GM12878 (cell line): ENCODE measurements at regions of chr2 and their contacts with region 1.

Region 1: DNA sequence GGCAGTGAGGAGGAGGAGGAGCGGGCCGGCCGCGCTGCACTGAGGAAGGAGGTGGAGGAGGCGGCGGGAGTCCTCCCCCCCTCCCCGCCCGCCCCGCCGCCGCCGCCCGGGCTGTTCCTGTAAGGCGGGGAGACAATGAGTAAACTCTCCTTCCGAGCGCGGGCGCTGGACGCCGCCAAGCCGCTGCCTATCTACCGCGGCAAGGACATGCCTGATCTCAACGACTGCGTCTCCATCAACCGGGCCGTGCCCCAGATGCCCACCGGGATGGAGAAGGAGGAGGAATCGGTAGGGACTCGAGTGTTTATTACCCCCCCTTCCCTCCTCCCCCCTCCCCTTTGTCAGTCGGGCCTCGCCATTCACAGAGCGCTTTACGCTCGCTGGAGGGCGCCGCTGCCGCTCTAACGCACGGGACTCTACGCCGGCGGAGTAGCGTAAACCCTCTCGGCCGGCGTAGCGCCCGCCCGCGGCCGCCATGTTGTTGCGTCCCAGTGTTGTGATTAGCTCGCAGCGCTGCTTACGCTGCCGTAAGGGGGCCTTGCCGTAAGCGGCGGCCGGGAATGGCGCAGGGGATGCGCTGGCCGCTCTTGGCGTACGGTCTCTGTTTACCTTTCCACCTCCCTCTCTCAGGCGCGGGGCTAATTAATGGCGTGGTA is 460 bp downstream of the EPC2 start:
- DNase-seq: peak; percentile 69
- ATAC-seq: peak; percentile 83
- H3K4me3 ChIP-seq: peak overlapping the region; percentile 88
- H3K27ac ChIP-seq: peak overlapping the region; percentile 72
- H3K4me1 ChIP-seq: peaks cover 15% of the 10 kb centered on the region
- H3K27me3 ChIP-seq: peaks cover 0 to 5% of the 10 kb centered on the region in 2 experiments; a peak in 2 of 4 replicates
- CTCF ChIP-seq: peak in 2 of 3 experiments; percentile 39 to 41; a peak in 3 of 6 replicates
- EP300 ChIP-seq: no peak
- POLR2A ChIP-seq: peak; percentile 78
- RAD21 ChIP-seq: peak; percentile 30

Region 2: DNA sequence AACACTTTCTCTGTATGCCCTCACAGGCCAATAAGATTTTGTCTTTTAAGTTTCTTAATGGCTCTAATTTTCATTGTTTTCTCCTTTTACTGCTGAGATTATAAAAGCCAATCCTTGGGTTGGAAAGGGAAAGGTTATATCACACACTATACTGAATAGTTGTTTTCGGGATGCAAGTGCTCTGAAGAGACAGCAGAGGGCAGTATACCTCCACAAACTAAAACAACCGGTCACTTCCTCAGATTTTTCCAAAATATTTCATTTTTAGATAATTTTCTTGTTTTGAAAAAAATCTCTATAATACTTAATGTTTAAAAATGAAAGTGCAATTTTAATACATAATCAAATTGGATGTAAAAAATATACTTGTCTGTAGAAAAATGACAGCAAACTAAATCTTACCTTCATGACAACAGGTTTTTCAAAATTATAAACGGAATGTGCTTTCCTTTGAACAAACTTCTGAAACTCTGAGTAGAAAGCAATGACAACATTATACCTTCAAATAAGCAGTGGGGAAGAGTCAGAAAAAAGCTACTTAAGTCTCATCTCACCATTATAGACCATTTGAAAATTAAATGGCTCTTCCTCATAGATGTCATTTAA is 707.2 kb before region 1 on chr2:
- CTCF ChIA-PET with region 1: interaction called, 3 read pairs
- POLR2A ChIA-PET with region 1: no interaction called
- RAD21 ChIA-PET with region 1: no interaction called
- SMC1A ChIA-PET with region 1: no interaction called
- in situ Hi-C with region 1: no loop called
- intact Hi-C with region 1: loop called (anchors 10 kb)
- DNase-seq: no peak
- ATAC-seq: peak; percentile 77
- H3K4me3 ChIP-seq: no peak overlapping the region
- H3K27ac ChIP-seq: no peak overlapping the region
- H3K4me1 ChIP-seq: no peaks in the 10 kb centered on the region
- H3K27me3 ChIP-seq: no peaks in the 10 kb centered on the region
- CTCF ChIP-seq: peak; percentile 75 to 80 (median 79)
- EP300 ChIP-seq: no peak
- POLR2A ChIP-seq: no peak
- RAD21 ChIP-seq: peak; percentile 78

Region 3: DNA sequence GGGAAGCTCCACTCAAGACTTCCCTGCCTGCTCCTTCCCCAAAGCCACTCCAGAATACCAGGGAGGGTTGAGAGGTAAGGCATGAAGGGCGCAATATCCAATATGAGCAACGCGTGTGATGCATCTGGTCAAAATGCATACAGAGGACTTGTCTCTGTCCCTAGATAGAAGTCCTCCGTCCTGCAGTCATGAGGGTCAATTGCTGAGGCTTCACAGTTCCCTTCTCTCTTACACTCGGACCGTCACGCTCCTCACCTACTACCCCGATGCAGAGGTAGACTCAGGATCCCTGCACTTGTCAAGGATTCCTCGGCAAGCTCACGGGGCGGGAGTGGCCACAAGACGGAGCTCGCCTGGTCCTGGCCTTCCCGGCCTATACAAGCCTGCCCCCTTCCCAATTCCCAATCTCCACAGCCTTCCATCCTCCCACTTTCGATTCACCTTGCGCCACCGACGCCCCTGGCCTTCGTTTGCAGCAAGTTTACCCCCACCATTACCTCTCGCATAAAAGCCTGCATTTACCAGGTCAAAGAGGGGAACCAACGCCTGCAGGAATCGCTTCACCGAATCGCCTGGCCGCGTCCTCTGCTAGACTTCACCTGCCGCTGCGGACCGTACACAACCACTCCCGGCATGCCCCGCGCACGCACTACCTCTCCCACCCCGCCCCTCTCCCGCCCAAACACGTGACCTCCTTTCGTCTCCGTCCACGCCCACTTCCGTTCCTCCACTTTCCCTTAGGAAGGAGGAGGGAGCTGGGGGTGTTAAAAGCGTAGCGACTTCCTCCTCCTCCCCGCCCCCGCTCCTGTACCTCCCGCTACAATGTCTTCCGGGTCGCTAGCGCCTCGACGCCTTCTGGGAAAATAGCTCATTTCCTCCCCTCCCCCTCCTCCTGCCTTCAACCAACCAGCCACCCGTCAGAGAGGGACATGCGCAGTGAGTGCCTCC is 624.6 kb before region 1 on chr2 and contains the start of gene ORC4:
- CTCF ChIA-PET with region 1: no interaction called
- POLR2A ChIA-PET with region 1: interaction called, 9 read pairs
- RAD21 ChIA-PET with region 1: no interaction called
- SMC1A ChIA-PET with region 1: no interaction called
- in situ Hi-C with region 1: no loop called
- intact Hi-C with region 1: loop called (anchors 10 kb)
- DNase-seq: peak; percentile 99
- ATAC-seq: peak; percentile 81
- H3K4me3 ChIP-seq: peak within 1 kb of the TSS; percentile 99
- H3K27ac ChIP-seq: peak within 1 kb of the TSS; percentile 96
- H3K4me1 ChIP-seq: no peaks in the 10 kb centered on the region
- H3K27me3 ChIP-seq: no peaks in the 10 kb centered on the region
- CTCF ChIP-seq: peak in 2 of 3 experiments; percentile 19 to 26; a peak in 2 of 6 replicates
- EP300 ChIP-seq: no peak; a peak in 1 of 4 replicates
- POLR2A ChIP-seq: peak; percentile 90
- RAD21 ChIP-seq: peak; percentile 19; the same call in 1 of the 2 replicates
- polyA plus RNA-seq, gene ORC4: 31.3 to 71.3 TPM

Region 4: DNA sequence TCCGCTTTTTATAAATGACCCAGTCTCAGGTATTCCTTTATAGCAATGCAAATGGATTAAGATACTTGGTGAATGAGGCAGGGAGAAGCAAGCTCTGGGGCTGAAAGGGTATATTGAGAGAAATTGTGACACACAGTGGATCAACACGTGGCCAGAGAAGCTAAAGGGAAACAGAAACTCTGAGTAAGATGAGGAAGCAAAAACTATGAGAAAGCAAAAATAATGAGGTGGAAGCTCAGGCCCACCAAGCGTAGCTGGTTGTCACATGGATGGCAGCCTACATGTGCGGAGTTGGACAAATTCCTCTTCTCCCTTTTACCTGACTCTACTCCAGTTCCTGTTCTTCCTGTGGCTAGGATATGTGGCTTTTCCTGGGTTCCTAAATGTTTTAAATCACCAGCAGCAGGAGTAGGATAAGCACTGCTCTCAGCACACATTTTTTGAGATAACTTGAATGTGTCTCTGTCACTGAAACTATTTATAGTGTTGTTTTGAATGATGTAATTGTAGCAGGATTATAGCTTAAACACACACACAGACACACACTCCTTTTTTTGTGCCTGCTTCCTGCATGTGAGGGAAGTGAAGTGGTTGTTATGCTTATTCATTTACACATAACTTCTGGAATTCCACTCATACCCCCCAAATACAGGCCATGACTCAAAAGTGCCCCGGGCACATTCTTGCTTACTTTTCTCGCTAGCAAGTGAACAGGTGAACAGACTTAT is 30.5 kb before region 1 on chr2:
- CTCF ChIA-PET with region 1: interaction called, 4 read pairs
- POLR2A ChIA-PET with region 1: interaction called, 4 read pairs
- RAD21 ChIA-PET with region 1: interaction called, 4 read pairs
- SMC1A ChIA-PET with region 1: interaction called, 11 read pairs
- in situ Hi-C with region 1: no loop called
- intact Hi-C with region 1: loop called (anchors 2 kb)
- DNase-seq: peak; percentile 53
- ATAC-seq: peak; percentile 94
- H3K4me3 ChIP-seq: peak overlapping the region; percentile 12; the same call in 1 of the 2 replicates
- H3K27ac ChIP-seq: peak overlapping the region; percentile 60
- H3K4me1 ChIP-seq: peaks cover 18% of the 10 kb centered on the region
- H3K27me3 ChIP-seq: no peaks in the 10 kb centered on the region
- CTCF ChIP-seq: no peak
- EP300 ChIP-seq: no peak
- POLR2A ChIP-seq: peak; percentile 60
- RAD21 ChIP-seq: no peak

Region 5: DNA sequence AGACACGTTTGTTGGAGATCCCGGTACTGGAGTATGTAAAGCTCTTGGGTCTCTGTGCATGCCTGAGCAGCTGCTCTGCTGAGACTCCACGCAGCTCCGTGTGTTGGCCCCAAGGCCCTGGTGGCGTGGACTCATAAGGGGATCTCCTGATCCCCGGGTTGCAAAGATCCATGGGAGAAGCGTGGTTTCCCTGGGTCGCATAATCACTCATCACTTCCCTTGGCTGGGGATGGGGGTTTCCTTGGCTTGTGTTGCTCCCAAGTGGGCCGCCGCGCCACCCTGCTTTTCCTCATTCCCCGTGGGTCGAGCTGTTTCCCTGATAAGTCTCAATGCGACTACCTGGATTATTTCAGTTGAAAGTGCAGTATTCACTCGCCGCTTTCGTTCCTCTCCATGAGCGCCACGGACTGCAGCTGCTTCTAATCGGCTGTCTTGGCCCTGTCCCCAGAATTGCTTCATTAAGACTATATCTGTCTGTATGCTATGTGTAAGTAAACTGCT is 75.5 kb after region 1 on chr2:
- CTCF ChIA-PET with region 1: interaction called, 3 read pairs
- POLR2A ChIA-PET with region 1: no interaction called
- RAD21 ChIA-PET with region 1: no interaction called
- SMC1A ChIA-PET with region 1: no interaction called
- in situ Hi-C with region 1: no loop called
- intact Hi-C with region 1: loop called (anchors 5 kb)
- DNase-seq: no peak
- ATAC-seq: peak; percentile 16; the same call in 1 of the 3 replicates
- H3K4me3 ChIP-seq: no peak overlapping the region
- H3K27ac ChIP-seq: no peak overlapping the region
- H3K4me1 ChIP-seq: peaks cover 18% of the 10 kb centered on the region
- H3K27me3 ChIP-seq: no peaks in the 10 kb centered on the region
- CTCF ChIP-seq: no peak
- EP300 ChIP-seq: no peak
- POLR2A ChIP-seq: no peak
- RAD21 ChIP-seq: no peak

Region 6: DNA sequence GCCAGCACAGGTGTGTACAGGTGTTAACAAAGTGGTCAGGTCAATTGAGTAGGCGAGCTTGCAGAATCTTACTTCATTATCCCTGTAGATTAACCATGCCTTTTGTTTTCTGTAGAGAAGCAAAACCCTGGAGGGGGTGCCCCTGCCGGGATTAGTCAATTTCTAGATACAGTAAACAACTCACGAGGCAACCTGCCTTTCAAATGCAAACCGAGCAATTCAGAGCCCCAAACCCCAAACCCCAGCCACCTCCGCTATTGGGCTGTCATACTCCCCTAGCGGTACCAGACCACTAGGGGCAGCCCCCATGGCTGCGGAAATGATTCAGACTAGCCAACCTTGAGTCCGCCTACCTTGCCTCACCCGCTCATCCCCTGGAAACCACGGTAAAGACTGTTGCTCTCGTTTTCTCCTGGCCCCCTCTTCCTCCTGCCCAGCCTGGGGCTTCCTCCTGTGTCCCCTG is 168.6 kb after region 1 on chr2:
- CTCF ChIA-PET with region 1: interaction called, 4 read pairs
- POLR2A ChIA-PET with region 1: no interaction called
- RAD21 ChIA-PET with region 1: no interaction called
- SMC1A ChIA-PET with region 1: interaction called, 3 read pairs
- in situ Hi-C with region 1: no loop called
- intact Hi-C with region 1: loop called (anchors 5 kb)
- DNase-seq: peak; percentile 76
- ATAC-seq: peak; percentile 99
- H3K4me3 ChIP-seq: no peak overlapping the region
- H3K27ac ChIP-seq: peak overlapping the region; percentile 31; the same call in 1 of the 2 replicates
- H3K4me1 ChIP-seq: peaks cover 16% of the 10 kb centered on the region
- H3K27me3 ChIP-seq: peaks cover 0 to 4% of the 10 kb centered on the region in 2 experiments; a peak in 2 of 4 replicates
- CTCF ChIP-seq: peak; percentile 27 to 73 (median 68)
- EP300 ChIP-seq: peak; percentile 67 to 70; a peak in 3 of 4 replicates
- POLR2A ChIP-seq: peak; percentile 36; the same call in 1 of the 2 replicates
- RAD21 ChIP-seq: peak; percentile 44

Region 7: GRCh38 chr2:148926291-148926961 is 281.4 kb after region 1 on chr2:
- CTCF ChIA-PET with region 1: no interaction called
- POLR2A ChIA-PET with region 1: no interaction called
- RAD21 ChIA-PET with region 1: no interaction called
- SMC1A ChIA-PET with region 1: no interaction called
- in situ Hi-C with region 1: no loop called
- intact Hi-C with region 1: loop called (anchors 10 kb)
- DNase-seq: peak; percentile 9
- ATAC-seq: peak; percentile 96
- H3K4me3 ChIP-seq: 0 out of 2 replicates have a peak overlapping the region, but pooled peaks have one; percentile 24
- H3K27ac ChIP-seq: no peak overlapping the region
- H3K4me1 ChIP-seq: no peaks in the 10 kb centered on the region
- H3K27me3 ChIP-seq: no peaks in the 10 kb centered on the region; a peak in 1 of 4 replicates
- CTCF ChIP-seq: peak; percentile 76 to 82 (median 80)
- EP300 ChIP-seq: no peak
- POLR2A ChIP-seq: no peak
- RAD21 ChIP-seq: peak; percentile 79